ENCODE measurements at regions of chr1 and their contacts with region 1.

Region 1: GRCh38 chr1:204390751-204391466 is 20.7 kb downstream of the PPP1R15B start:
- DNase-seq: no peak
- H3K4me3 Mint-ChIP-seq: no peak overlapping the region
- H3K27ac Mint-ChIP-seq: no peak overlapping the region
- H3K4me1 Mint-ChIP-seq: no peaks in the 10 kb centered on the region
- H3K27me3 Mint-ChIP-seq: no peaks in the 10 kb centered on the region
- CTCF ChIP-seq: no peak

Region 2: DNA sequence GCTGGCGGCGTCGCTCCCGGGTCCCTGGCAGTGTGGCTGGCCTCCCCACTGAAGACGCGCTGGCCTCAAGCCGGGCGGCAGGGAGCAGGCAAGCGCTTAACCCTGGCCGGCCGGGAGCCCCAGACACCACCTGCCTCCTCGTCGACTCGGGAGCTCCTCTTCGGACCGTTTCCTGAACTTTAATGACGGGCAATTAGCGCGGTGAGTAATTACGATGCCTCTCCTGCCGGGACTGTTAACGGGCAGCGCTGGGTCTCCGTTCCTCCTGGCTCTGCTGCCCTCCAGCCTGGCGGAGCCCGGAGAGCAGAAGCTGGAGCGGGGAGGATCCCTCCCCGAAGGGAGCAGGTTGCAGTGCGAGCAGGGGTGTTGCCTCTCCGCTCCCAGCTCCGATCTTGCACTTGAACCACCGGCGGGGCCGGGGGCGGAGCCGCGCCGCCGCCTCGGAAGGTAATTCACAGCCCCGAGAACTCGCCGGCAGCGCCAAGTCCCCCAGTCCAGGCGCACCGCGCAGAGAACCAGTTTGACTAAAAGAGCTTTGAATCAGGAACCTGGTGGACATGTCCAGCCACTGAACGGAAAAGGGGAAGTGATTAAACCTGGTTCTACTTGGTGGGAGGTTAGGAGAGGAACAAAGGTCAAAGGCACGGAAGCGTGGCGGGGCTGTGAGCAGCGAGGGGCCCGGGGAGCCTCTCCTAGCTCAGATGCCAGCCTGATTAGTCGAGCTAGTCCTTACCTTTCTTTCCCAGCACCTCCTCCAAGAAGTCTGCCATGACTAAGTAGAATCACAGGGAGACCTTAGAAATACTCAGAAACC is 12.9 kb before region 1 on chr1:
- CTCF ChIA-PET with region 1: interaction called, 10 read pairs
- POLR2A ChIA-PET with region 1: interaction called, 15 read pairs
- intact Hi-C with region 1: no loop called
- DNase-seq: peak; percentile 46
- H3K4me3 Mint-ChIP-seq: peak overlapping the region; percentile 70
- H3K27ac Mint-ChIP-seq: no peak overlapping the region
- H3K4me1 Mint-ChIP-seq: peaks cover 5% of the 10 kb centered on the region
- H3K27me3 Mint-ChIP-seq: no peaks in the 10 kb centered on the region
- CTCF ChIP-seq: no peak

Measured in MCF 10A (cell line).